ENCODE measurements at regions of chr20 and their contacts with region 1.

Region 1: DNA sequence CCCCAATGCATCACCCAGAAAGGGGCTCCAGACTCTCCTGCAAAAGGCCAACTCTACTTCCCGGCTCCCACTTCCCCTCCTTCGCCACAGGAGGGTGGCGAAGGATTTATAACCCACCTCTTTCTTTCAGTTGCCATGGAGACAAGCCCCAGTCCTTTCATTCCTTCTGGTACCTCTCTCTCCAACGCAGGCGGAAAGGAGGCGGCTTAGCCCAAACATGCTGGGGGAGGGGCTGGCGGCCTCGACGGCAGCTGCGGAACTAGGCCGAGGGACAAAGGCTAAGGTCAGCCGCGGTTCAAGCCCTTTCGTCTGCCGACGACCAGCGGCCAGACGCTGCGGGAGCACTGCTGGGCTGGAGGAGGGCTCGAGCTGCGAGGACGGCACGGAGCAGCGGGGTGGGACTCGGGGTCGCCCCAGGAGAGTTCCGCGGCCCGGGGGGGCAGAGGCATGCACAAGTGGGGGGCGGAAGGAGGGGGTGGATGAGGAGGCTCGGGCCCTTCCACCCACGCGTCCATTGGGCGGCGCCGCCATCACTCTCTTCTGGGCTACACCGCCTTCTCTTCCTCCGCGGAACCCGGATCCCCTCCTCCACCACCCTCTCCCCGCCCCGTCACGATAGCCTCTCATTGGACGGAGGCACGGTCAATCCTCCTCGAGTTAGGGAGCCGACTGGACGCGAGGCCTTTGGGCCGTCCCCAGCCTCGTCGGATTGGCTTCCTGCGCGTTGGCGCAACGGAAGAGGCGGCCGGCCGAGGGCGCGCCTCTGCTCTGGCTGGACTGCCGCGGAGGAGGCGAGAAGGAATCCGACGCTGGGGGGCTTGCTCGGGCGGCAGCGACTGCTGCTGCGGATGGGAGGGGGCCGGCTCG is at the start of gene PANK2:
- DNase-seq: peak; percentile 96 to 98
- ATAC-seq: peak; percentile 96 to 100 (median 96)
- H3K4me3 ChIP-seq: peak within 1 kb of the TSS; percentile 81
- H3K4me3 Mint-ChIP-seq: peak within 1 kb of the TSS; percentile 100
- H3K27ac ChIP-seq: peak within 1 kb of the TSS; percentile 82
- H3K27ac Mint-ChIP-seq: peak within 1 kb of the TSS; percentile 96 to 98
- H3K4me1 ChIP-seq: peaks cover 38% of the 10 kb centered on the region
- H3K4me1 Mint-ChIP-seq: peaks cover 53 to 60% of the 10 kb centered on the region in 2 donors
- H3K27me3 ChIP-seq: no peaks in the 10 kb centered on the region
- H3K27me3 Mint-ChIP-seq: no peaks in the 10 kb centered on the region
- CTCF ChIP-seq: peak; percentile 32
- total RNA-seq, gene PANK2: 50.5 to 74.3 (median 61.3) TPM

Region 2: GRCh38 chr20:3900187-3900604 is 11.3 kb after region 1 on chr20:
- intact Hi-C with region 1: loop called (anchors 1 kb)
- DNase-seq: no peak
- ATAC-seq: no peak
- H3K4me3 ChIP-seq: no peak overlapping the region
- H3K4me3 Mint-ChIP-seq: peak overlapping the region; percentile 62
- H3K27ac ChIP-seq: no peak overlapping the region
- H3K27ac Mint-ChIP-seq: peak overlapping the region; percentile 68 to 82
- H3K4me1 ChIP-seq: peaks cover 57% of the 10 kb centered on the region
- H3K4me1 Mint-ChIP-seq: peaks cover 61 to 68% of the 10 kb centered on the region in 2 donors
- H3K27me3 ChIP-seq: no peaks in the 10 kb centered on the region
- H3K27me3 Mint-ChIP-seq: no peaks in the 10 kb centered on the region
- CTCF ChIP-seq: no peak

Region 3: DNA sequence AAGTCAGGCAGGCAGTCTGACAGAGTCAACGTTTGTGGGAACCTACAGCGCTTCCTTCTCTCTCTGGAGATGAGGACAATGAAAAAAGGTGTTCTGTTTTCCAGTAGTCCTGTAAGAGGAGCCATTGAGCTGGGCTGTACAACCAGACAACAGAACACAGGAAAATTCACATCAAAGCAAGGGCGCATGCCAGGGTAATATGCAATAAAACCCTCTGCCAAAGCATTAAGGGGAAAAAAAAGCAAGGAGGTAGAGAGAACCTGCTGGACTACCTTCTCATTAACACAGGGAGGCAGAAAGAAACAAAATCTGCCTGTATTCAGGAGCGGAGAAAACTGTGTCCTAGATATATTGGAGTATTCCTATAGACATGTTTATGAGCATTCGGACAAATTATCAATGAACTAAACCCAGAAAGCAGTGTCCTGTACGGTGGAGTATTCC is 125.2 kb after region 1 on chr20:
- intact Hi-C with region 1: loop called (anchors 2 kb)
- DNase-seq: peak in 1 of 2 donors; percentile 68
- ATAC-seq: no peak
- H3K4me3 ChIP-seq: no peak overlapping the region
- H3K4me3 Mint-ChIP-seq: peak overlapping the region; percentile 63
- H3K27ac ChIP-seq: no peak overlapping the region
- H3K27ac Mint-ChIP-seq: peak overlapping the region; percentile 29 to 81
- H3K4me1 ChIP-seq: peaks cover 24% of the 10 kb centered on the region
- H3K4me1 Mint-ChIP-seq: peaks cover 22 to 23% of the 10 kb centered on the region in 2 donors
- H3K27me3 ChIP-seq: no peaks in the 10 kb centered on the region
- H3K27me3 Mint-ChIP-seq: no peaks in the 10 kb centered on the region
- CTCF ChIP-seq: no peak

Region 4: GRCh38 chr20:4089756-4090487 is 201.1 kb after region 1 on chr20:
- intact Hi-C with region 1: loop called (anchors 5 kb)
- DNase-seq: no peak
- ATAC-seq: no peak
- H3K4me3 ChIP-seq: no peak overlapping the region
- H3K4me3 Mint-ChIP-seq: no peak overlapping the region
- H3K27ac ChIP-seq: no peak overlapping the region
- H3K27ac Mint-ChIP-seq: no peak overlapping the region
- H3K4me1 ChIP-seq: peaks cover 14% of the 10 kb centered on the region
- H3K4me1 Mint-ChIP-seq: peaks cover 3 to 8% of the 10 kb centered on the region in 2 donors
- H3K27me3 ChIP-seq: no peaks in the 10 kb centered on the region
- H3K27me3 Mint-ChIP-seq: peaks cover 2 to 14% of the 10 kb centered on the region in 2 donors
- CTCF ChIP-seq: no peak